ENCODE measurements at regions of chr4 and their contacts with region 1.

Region 1: DNA sequence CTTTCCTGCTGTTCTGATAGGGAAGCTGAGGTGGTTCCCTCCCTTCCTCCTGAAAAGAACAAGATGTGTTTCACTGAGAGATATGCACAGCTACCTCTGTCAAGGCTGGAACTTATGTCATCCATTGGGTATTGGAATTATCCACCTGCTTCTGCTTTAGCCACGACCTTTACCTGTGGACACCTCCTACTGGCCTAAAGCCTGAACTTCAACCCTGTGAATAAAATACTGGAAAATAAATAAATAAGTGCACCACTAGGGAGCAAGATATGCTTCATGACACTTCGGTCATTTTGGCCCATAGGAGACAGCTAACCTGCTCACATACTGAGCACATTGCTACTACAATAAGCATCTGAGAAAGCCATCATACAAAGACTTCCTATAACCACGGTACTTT is 419.9 kb upstream of the NWD2 start:
- DNase-seq: no peak
- H3K4me3 ChIP-seq: no peak overlapping the region
- H3K27ac ChIP-seq: no peak overlapping the region
- H3K4me1 ChIP-seq: no peaks in the 10 kb centered on the region
- H3K27me3 ChIP-seq: no peaks in the 10 kb centered on the region
- CTCF ChIP-seq: peak in 2 of 3 experiments; percentile 72 to 79; a peak in 3 of 4 replicates
- EP300 ChIP-seq: no peak
- POLR2A ChIP-seq: no peak
- RAD21 ChIP-seq: peak; percentile 69 to 81

Region 2: DNA sequence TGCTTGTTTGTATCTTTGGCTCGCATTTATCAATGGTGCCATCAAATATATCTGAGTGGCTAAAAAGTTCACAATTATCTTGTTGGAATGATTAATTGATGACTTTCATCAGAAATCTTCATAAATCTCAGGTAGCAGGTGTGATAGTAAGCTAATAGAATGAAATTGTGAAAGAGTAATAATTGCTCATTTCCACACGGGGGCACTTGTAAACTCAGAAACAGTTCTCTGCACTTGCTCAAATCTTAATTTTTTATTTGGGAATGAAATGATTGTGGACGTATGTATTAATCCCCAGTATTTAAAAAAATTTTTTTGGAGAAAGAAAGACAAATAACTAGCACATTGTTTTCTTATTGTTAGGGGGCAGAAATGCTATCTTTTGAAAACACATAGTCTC is 410.4 kb before region 1 on chr4:
- CTCF ChIA-PET with region 1: interaction called, 10 read pairs
- POLR2A ChIA-PET with region 1: no interaction called
- DNase-seq: no peak
- H3K4me3 ChIP-seq: no peak overlapping the region
- H3K27ac ChIP-seq: no peak overlapping the region
- H3K4me1 ChIP-seq: no peaks in the 10 kb centered on the region
- H3K27me3 ChIP-seq: no peaks in the 10 kb centered on the region
- CTCF ChIP-seq: peak in 1 of 3 experiments; percentile 23; a peak in 2 of 4 replicates
- EP300 ChIP-seq: no peak
- POLR2A ChIP-seq: no peak
- RAD21 ChIP-seq: peak; percentile 54 to 59

Region 3: DNA sequence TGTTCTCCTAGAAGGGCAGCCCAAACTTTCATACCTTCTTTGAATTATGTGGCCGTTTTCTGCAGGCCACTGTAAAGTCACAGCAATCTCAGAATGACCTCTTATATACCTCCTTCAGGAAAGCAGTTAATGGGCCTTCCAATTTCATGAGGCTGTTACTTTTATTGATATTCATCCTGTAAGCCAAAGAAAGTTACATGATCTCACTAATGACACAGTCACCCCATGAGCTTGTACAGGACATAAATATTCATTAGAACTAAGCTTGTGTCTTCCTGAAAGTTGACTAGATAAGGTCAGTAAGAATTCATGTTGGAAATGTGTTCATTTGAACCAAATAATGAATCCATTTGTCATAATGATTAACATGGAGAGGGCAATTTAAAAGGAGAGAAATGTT is 136.7 kb after region 1 on chr4:
- CTCF ChIA-PET with region 1: no interaction called
- POLR2A ChIA-PET with region 1: no interaction called
- DNase-seq: no peak
- H3K4me3 ChIP-seq: no peak overlapping the region
- H3K27ac ChIP-seq: no peak overlapping the region
- H3K4me1 ChIP-seq: peaks cover 0 to 3% (median 0%) of the 10 kb centered on the region in 4 experiments; a peak in 1 of 7 replicates
- H3K27me3 ChIP-seq: no peaks in the 10 kb centered on the region
- CTCF ChIP-seq: no peak
- EP300 ChIP-seq: no peak
- POLR2A ChIP-seq: no peak
- RAD21 ChIP-seq: no peak

Measured in H1 (cell line).